ENCODE measurements at regions of chr1 and their contacts with region 1.

Region 1: DNA sequence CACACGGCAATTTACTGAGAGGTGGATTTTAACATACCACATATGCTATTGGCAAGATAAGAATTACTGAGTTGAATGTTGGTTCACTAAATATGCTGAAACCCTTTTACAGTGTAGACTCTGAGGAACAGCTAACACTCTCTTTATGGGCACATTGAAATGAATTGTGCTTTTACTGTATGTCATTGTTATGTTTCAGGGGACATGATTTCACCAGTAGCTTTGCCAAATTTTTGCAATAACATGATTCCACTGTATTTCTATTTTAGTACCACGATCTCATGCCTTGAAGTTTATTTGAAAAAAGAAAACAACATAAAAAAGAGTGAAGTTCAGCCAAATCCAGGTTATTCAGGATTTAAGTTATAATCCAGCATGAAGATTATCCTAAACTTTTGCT is 188.5 kb downstream of the HLX start:
- DNase-seq: no peak
- H3K4me3 ChIP-seq: no peak overlapping the region
- H3K27ac ChIP-seq: no peak overlapping the region
- H3K4me1 ChIP-seq: no peaks in the 10 kb centered on the region
- H3K27me3 ChIP-seq: no peaks in the 10 kb centered on the region
- CTCF ChIP-seq: no peak

Region 2: GRCh38 chr1:220157738-220158137 is 910.0 kb before region 1 on chr1:
- CTCF ChIA-PET with region 1: no interaction called
- dilution Hi-C with region 1: no loop called
- in situ Hi-C with region 1: no loop called
- intact Hi-C with region 1: no loop called
- DNase-seq: no peak
- H3K4me3 ChIP-seq: no peak overlapping the region
- H3K27ac ChIP-seq: no peak overlapping the region
- H3K4me1 ChIP-seq: no peaks in the 10 kb centered on the region
- H3K27me3 ChIP-seq: no peaks in the 10 kb centered on the region
- CTCF ChIP-seq: no peak

Region 3: GRCh38 chr1:221105578-221105977 is 37.9 kb after region 1 on chr1:
- CTCF ChIA-PET with region 1: interaction called, 10 read pairs
- dilution Hi-C with region 1: no loop called
- in situ Hi-C with region 1: no loop called
- intact Hi-C with region 1: no loop called
- DNase-seq: no peak
- H3K4me3 ChIP-seq: no peak overlapping the region
- H3K27ac ChIP-seq: no peak overlapping the region
- H3K4me1 ChIP-seq: no peaks in the 10 kb centered on the region
- H3K27me3 ChIP-seq: no peaks in the 10 kb centered on the region
- CTCF ChIP-seq: no peak

Measured in mammary epithelial cell (primary cell).